Right lobe of liver (tissue), 6 donors: ENCODE measurements at regions of chr17 and their contacts with region 1.

Region 1: DNA sequence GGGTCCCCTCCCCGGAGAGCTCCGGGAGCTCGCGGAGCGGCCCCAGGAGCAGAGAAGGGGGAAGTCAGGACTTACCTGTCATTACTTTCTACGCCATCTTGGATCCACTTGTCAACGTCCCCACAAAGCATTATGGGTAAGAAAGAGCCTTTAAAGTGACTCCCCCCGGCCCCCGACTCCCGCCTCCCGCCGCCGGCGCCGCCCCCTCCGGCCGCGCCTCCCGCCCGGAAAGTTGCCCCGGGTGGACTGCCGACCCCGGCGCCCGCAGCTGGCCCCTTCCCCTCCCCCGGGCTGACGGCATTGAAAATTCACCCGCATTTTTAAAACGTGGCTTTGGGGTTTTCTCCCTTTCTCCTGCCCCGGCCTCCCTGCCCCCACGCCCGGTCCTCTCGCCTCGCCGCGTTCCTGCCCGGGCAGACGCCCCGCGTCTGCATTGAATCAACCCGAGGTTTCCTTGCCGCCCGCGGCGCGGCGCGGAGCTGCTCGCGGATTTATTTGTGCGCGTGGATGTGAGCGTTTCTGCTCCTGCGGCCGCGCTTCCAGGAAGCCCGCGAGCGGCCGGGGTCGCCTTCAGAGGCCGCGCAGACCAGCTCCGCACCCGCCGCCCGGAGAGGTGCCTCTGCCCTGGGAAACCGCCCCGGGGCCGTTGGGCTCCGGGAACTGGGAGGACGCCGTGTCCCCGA is at the start of gene HELZ:
- DNase-seq: peak; percentile 88 to 91 (median 90)
- ATAC-seq: peak; percentile 77 to 88 (median 84)
- H3K4me3 ChIP-seq: peak within 1 kb of the TSS; percentile 96 to 99 (median 98)
- H3K27ac ChIP-seq: peak within 1 kb of the TSS; percentile 99
- H3K4me1 ChIP-seq: peaks cover 0 to 33% (median 3%) of the 10 kb centered on the region in 4 donors
- H3K27me3 ChIP-seq: no peaks in the 10 kb centered on the region
- CTCF ChIP-seq: no peak
- POLR2A ChIP-seq: peak; percentile 37
- total RNA-seq, gene HELZ: 24.2 to 33.6 (median 30.9) TPM

Region 2: DNA sequence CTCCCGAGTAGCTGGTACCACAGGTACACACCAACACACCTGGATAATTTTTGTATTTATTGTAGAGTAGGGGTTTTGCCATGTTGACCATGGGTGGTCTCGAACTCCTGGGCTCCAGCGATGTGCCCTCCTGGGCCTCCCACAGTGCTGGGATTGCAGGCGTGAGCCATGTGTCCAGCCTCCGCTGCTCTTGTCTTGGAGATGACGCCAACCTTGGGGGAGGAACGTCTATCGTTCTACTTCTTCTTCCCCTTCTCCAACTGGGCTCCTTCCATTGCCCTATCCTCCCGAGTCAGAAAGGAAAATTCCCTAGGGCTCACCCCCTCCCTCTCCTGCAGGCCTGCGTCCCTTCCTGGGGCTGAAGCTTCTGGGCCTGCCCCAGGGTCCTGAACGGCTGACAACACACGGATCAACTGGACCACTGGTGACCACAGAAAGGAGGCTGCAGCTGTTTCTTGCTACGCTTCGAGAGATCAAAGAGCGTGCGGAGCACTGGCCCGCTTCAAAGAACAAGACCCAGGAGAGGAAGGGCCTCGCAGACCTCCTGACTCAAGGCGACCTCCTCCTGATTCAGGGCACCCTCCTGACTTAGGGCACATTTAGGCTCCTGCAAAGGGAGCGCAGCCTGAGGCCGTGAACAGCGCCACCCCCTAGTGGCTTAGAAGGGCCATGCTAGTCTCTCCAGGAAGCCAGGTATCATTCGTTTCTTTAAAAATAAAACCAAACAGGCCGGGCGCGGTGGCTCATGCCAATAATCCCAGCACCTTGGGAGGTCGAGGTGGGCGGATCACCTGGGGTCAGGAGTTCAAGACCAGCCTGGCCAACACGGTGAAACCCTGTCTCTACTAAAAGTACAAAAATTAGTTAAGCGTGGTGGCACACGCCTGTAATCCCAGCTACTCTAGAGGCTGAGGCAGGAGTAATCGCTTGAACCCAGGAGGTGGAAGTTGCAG is 48.3 kb after region 1 on chr17:
- intact Hi-C with region 1: loop called in 1 of 2 experiments (anchors 10 kb)
- DNase-seq: peak; percentile 75 to 82 (median 78)
- ATAC-seq: peak; percentile 87 to 91 (median 88)
- H3K4me3 ChIP-seq: peak overlapping the region in 1 of 3 donors; percentile 5
- H3K27ac ChIP-seq: peak overlapping the region in 1 of 3 donors; percentile 7
- H3K4me1 ChIP-seq: peaks cover 0 to 4% (median 0%) of the 10 kb centered on the region in 4 donors
- H3K27me3 ChIP-seq: no peaks in the 10 kb centered on the region
- CTCF ChIP-seq: peak; percentile 74 to 92 (median 86)
- POLR2A ChIP-seq: no peak